Calu3 (cell line): ENCODE measurements at regions of chr1 and their contacts with region 1.

Region 1: DNA sequence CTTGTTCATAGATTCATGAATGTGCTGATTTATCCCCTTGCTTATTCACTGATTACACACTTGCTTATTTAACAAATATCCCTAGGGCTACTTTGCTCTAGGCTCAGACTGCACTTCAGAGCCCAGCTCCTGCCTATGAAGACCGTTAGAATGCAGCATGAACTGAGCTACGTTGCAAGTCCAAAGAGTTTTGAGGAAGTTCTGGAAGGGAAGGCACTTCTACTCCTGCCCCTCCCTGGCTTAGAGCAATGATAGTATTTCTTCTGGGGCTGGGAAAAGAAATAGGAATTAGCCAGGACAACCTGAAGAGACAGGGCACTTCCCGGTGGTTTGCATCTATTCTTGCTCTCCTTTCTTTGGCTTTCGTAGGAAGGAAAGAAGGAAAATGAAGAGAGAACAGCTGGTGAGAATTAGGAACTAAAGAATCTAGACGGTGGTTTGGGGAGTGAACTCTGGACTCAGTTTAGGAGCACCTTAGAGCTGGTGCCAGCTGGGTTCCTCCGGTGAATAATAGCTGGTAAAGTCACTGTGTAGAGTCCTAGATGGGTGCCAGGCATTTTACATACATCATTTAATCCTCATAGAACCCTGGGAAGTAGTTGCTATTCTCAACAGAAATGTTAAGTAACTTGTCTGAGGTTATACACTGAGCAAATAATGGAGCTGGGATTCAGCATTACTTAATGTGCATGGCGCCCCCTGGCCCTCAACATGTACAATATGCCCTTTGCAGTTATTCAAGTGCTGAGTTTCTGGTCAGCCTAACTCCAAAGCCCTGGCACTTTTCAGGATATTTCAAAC is 65.9 kb downstream of the NDUFS5 start:
- DNase-seq: peak; percentile 76
- H3K4me3 Mint-ChIP-seq: no peak overlapping the region
- H3K27ac Mint-ChIP-seq: no peak overlapping the region
- H3K4me1 Mint-ChIP-seq: peaks cover 8% of the 10 kb centered on the region
- H3K27me3 Mint-ChIP-seq: peaks cover 35% of the 10 kb centered on the region
- CTCF ChIP-seq: peak; percentile 60

Region 2: DNA sequence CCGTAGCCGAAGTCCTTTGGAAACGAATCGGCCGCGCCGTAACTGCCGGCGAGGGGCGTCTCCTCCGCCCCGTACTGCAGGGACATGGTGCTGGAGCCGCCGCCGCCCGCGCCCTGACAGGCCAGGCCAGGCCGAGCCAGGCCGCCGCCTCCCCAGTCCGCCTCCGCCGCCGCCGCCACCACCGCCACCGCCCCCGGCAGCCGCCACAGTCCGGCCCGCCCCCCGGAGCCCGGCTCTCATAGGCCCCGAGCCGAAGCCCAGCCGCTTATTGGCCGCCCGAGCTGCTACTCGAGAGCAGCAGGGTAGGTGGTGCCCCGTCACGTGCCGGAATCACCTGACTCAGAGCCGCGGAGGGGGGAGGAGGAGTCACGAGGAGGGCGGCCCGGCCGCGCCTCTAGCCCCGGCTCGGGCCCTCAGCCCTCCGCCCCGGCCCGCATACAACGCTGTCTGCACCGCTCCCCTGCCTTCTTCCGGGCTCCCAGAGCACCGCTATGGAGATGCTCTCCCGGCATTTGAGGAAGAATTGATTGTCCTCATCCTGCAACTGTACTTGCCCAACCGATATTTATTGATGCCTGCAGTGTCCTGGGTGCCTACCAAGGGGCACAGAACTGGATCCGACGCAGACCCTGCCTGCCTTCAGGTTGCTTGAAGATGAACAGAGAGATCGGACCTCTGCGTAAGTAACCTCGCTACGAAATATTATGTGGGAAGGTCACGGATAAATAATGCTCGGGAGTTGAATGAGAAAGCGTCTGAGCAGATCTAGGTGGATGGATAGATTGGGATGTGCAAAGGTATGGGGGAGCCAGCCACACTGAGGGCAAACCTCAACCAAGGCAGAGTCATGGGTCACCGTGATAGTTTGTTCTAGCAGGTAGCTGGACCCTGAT is 232.2 kb before region 1 on chr1 and contains the start of gene RRAGC:
- CTCF ChIA-PET with region 1: interaction called, 3 read pairs
- intact Hi-C with region 1: loop called (anchors 2 kb)
- DNase-seq: peak; percentile 99
- H3K4me3 Mint-ChIP-seq: peak within 1 kb of the TSS; percentile 91
- H3K27ac Mint-ChIP-seq: peak within 1 kb of the TSS; percentile 74
- H3K4me1 Mint-ChIP-seq: peaks cover 8% of the 10 kb centered on the region
- H3K27me3 Mint-ChIP-seq: no peaks in the 10 kb centered on the region
- CTCF ChIP-seq: no peak
- total RNA-seq, gene RRAGC: 23.7 and 25.9 TPM in 2 replicates

Region 3: DNA sequence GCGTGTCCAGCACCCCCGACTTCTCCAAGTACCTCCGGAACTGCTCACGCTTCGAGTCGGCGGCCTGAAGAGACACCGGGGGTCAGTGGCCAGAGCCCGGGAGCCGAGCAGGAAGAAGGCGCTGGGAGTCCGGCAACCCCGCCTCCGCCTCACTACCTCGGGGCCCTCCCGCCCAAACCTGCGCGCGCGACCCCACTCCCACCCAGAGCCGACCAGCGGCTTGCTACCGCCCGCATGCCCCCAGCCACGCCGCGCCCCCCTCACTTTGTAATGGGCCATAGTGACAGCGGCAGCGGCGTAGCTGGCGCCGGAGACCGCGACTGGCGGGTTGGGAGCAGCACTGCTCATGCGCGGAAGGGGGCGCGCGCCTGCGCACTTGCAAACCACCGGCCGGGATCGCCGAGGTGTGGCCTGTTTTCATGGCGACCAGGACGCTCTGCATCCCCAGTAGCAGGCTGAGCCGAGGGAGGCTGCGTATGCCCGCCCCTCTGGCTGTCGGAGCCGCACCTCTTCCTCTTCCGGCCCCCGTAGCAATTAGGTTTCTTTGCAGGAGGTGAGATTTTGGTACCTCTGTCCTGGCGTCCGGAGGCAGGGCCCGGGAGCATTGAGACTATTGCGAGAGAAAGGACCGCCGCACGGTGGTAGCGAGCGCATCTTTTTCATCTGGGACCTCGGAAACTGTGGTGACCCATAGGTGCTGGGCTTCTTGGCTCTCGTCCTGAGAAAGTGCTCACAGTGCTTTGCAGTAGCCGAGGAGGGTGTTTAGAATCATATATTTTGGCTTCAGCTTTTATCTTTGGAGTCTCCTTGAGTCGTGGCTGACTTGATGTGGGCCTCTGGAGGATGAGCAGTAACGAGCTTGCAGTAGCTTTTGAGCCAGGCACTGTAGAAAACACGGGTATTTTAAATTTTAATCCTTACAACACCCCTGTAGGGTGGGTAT is 218.7 kb before region 1 on chr1 and contains the start of gene MYCBP:
- CTCF ChIA-PET with region 1: interaction called, 4 read pairs
- intact Hi-C with region 1: loop called (anchors 5 kb)
- DNase-seq: peak; percentile 97
- H3K4me3 Mint-ChIP-seq: peak within 1 kb of the TSS; percentile 83
- H3K27ac Mint-ChIP-seq: peak within 1 kb of the TSS; percentile 79
- H3K4me1 Mint-ChIP-seq: peaks cover 14% of the 10 kb centered on the region
- H3K27me3 Mint-ChIP-seq: no peaks in the 10 kb centered on the region
- CTCF ChIP-seq: no peak
- total RNA-seq, gene MYCBP: 25.9 and 33.2 TPM in 2 replicates

Region 4: GRCh38 chr1:39061951-39062350 is 30.1 kb before region 1 on chr1:
- CTCF ChIA-PET with region 1: no interaction called
- intact Hi-C with region 1: no loop called
- DNase-seq: no peak
- H3K4me3 Mint-ChIP-seq: no peak overlapping the region
- H3K27ac Mint-ChIP-seq: no peak overlapping the region
- H3K4me1 Mint-ChIP-seq: no peaks in the 10 kb centered on the region
- H3K27me3 Mint-ChIP-seq: no peaks in the 10 kb centered on the region
- CTCF ChIP-seq: no peak

Region 5: DNA sequence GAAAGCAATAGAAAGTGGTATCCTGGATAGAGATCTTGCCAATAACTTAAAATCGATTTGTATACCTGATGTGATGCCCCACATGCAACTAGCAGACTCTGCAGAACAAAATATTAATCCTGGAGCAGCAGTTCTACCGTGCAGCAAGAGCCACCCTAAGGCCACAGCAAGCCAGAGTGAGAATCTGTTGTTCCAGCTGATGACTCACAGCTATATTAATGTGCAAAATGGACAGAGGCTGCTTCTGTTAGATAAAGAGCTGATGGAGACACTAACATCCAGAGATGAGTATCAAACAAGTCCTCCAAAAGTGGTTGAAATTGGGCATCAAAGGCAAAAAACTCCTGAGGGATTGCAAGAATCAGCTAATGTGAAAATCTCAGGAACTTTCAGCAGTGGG is 240.2 kb after region 1 on chr1:
- CTCF ChIA-PET with region 1: no interaction called
- intact Hi-C with region 1: no loop called
- DNase-seq: no peak
- H3K4me3 Mint-ChIP-seq: no peak overlapping the region
- H3K27ac Mint-ChIP-seq: no peak overlapping the region
- H3K4me1 Mint-ChIP-seq: no peaks in the 10 kb centered on the region
- H3K27me3 Mint-ChIP-seq: no peaks in the 10 kb centered on the region
- CTCF ChIP-seq: no peak

Region 6: DNA sequence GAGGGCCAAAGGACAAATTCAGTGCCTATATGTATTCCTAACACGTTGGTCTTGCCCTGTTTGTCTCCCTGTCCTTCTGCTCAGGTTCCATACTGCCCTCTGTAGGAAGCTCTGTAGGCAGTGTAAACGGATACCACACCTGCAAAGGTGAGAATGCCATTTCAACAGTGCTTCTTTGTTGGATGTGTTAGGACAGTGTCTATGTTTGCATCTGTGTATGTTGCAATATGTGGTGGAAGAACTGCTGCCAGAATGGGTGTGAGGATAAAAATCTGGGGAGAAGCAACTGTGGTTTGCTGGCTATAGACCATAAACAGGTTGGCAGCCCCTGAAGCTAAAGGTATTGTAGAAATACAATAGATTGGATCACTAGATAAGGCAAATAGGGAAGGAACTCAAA is 286.3 kb after region 1 on chr1:
- CTCF ChIA-PET with region 1: no interaction called
- intact Hi-C with region 1: no loop called
- DNase-seq: peak; percentile 74
- H3K4me3 Mint-ChIP-seq: no peak overlapping the region
- H3K27ac Mint-ChIP-seq: peak overlapping the region; percentile 26
- H3K4me1 Mint-ChIP-seq: peaks cover 16% of the 10 kb centered on the region
- H3K27me3 Mint-ChIP-seq: no peaks in the 10 kb centered on the region
- CTCF ChIP-seq: peak; percentile 46